ENCODE measurements at regions of chr6 and their contacts with region 1.

Region 1: DNA sequence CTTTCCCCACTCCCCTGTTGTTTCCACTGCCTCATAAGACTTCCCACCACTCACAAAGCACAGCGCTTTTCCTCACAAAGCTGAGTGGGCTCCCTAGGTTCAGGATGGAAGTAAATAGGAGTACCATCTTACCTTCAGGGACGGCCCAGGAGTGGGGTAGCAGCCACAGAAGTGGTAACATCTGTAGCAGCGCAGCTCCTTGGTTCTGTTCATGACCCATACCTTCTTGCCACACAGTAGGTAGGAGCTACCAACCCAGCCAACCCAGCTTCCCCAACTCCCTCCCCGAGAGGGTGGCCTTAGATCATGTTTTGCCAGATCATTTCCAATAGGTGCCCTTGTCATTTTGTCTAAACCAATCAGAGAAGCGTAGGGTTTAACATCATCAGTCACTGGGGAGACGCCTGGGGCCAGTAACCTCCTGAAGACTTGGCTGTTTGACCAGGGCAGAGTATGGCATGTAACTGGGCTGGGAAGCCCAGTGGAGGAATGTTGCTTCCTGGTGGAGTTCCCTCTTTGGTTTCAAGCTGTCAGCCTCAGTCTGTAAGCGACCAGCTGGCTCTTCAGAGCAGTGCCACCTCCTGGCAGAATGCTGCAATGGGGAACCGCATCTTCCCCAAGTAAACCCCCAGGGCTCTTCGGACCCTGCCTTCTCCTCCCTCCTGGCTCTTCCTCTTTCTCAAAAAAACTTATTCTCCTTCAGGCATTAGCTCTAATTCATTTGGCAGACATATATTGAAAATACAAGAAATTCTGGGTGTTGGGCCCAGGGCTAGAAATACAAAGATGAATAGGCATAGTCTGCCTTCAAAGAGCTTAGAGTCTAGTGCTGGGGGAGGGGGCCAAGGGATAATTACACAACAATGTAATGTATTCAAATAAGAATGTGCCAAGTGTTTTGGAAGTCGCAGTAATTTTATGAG is at the start of gene HLA-DMA:
- DNase-seq: peak; percentile 89
- H3K4me3 Mint-ChIP-seq: no peak within 1 kb of the TSS
- H3K27ac Mint-ChIP-seq: no peak within 1 kb of the TSS
- H3K4me1 Mint-ChIP-seq: no peaks in the 10 kb centered on the region
- H3K27me3 Mint-ChIP-seq: no peaks in the 10 kb centered on the region
- CTCF ChIP-seq: peak; percentile 45
- total RNA-seq, gene HLA-DMA: 2.4 and 2.9 TPM in 2 replicates

Region 2: DNA sequence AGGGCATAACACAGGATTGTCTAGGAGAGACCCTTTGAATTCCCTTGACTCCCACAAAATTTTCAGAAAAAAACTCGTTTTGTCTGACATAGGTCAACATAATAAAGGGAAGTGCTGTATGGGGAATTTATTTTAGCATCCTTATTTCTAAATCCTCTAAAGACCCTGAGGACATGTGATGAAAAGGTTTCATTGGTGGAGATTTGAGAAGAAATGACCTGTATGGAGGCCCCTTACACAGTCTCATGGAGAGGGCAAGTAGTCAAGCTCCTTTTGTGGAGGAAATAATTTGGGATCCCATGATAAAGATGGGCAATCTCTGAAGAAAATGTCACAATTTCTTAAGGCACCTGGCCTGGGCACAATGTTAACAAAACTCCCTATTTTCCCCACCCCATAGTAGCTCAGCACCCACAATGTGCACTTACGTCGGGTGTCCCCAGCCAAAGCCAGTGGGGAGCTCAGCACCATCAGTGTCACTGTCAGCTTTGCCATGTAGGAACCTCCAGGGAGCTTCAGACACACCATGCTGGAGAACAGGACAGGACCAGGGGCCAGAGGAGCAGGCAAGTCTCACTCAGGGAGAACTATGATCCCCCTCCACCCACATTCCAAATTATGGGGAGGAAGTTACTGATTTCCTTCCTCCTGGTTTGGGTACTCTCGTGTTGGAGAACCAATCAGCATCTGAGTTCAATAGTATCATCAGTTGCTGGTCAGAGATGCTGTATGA is 423.2 kb before region 1 on chr6 and contains the start of gene HLA-DRB5:
- CTCF ChIA-PET with region 1: no interaction called
- POLR2A ChIA-PET with region 1: no interaction called
- intact Hi-C with region 1: no loop called
- DNase-seq: no peak
- H3K4me3 Mint-ChIP-seq: no peak within 1 kb of the TSS
- H3K27ac Mint-ChIP-seq: no peak within 1 kb of the TSS
- H3K4me1 Mint-ChIP-seq: no peaks in the 10 kb centered on the region
- H3K27me3 Mint-ChIP-seq: peaks cover 48% of the 10 kb centered on the region
- CTCF ChIP-seq: no peak
- total RNA-seq, gene HLA-DRB5: not detected in 2 replicates

Region 3: DNA sequence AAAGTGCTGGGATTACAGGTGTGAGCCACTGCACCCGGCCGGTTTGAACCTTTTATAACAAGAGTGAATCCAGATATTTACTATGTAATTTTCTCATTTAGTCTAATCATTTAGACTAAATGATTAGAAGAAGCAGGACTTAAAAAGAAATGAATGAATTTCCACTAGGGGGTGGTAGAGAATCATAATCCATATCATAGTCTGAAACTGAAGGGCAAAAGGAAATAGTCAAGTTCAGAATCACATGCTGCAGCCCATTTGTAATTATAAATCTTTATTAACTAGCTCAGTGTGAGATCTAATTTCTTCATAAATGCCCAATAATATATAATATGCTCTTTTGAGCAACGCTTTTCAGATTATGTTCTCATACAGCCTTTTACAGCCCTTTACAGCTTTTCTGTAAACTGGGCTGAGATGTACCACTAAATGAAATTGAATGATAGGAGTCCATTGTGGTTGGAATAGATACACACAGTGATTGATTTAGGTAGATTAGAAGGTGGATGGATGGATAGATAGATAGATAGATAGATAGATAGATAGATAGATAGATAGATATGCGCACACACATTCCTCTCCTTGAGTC is 67.3 kb before region 1 on chr6:
- CTCF ChIA-PET with region 1: interaction called, 23 read pairs
- POLR2A ChIA-PET with region 1: no interaction called
- intact Hi-C with region 1: loop called (anchors 1 kb)
- DNase-seq: peak; percentile 74
- H3K4me3 Mint-ChIP-seq: no peak overlapping the region
- H3K27ac Mint-ChIP-seq: no peak overlapping the region
- H3K4me1 Mint-ChIP-seq: peaks cover 11% of the 10 kb centered on the region
- H3K27me3 Mint-ChIP-seq: no peaks in the 10 kb centered on the region
- CTCF ChIP-seq: peak; percentile 56

Region 4: GRCh38 chr6:32940656-32941213 is 12.3 kb before region 1 on chr6 and contains the start of gene HLA-DMB:
- CTCF ChIA-PET with region 1: interaction called, 51 read pairs
- POLR2A ChIA-PET with region 1: interaction called, 4 read pairs
- intact Hi-C with region 1: no loop called
- DNase-seq: peak; percentile 75
- H3K4me3 Mint-ChIP-seq: no peak within 1 kb of the TSS
- H3K27ac Mint-ChIP-seq: no peak within 1 kb of the TSS
- H3K4me1 Mint-ChIP-seq: peaks cover 5% of the 10 kb centered on the region
- H3K27me3 Mint-ChIP-seq: peaks cover 74% of the 10 kb centered on the region
- CTCF ChIP-seq: no peak
- total RNA-seq, gene HLA-DMB: not detected in 2 replicates

Region 5: DNA sequence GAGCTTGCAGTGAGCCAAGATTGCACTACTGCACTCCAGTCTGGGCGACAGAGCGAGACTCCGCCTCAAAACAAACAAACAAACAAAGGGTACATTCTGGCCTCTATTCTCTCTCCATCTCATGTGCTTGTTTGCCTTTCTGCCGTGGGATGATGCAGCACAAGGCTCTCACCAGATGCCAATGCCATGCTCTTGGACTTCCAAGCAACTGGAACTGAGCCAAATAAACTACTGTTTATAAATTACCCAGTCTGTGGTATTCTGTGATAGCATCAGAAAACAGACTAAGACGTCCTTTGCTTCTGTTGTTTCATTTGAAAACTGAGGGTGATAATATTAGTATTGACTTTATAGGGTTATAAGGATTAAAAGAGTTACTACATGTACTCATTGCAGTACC is 11.7 kb after region 1 on chr6:
- CTCF ChIA-PET with region 1: interaction called, 55 read pairs
- POLR2A ChIA-PET with region 1: interaction called, 130 read pairs
- intact Hi-C with region 1: no loop called
- DNase-seq: no peak
- H3K4me3 Mint-ChIP-seq: no peak overlapping the region
- H3K27ac Mint-ChIP-seq: no peak overlapping the region
- H3K4me1 Mint-ChIP-seq: peaks cover 34% of the 10 kb centered on the region
- H3K27me3 Mint-ChIP-seq: no peaks in the 10 kb centered on the region
- CTCF ChIP-seq: no peak

Measured in MCF 10A (cell line).